Activated B cell treated with CpG ODN at 0.5 μM for 24 hours (primary cell): ENCODE measurements at regions of chr2 and their contacts with region 1.

Region 1: GRCh38 chr2:210252699-210253606 is 27.7 kb upstream of the ACADL start:
- DNase-seq: no peak
- ATAC-seq: no peak
- H3K4me3 Mint-ChIP-seq: no peak overlapping the region
- H3K27ac Mint-ChIP-seq: no peak overlapping the region
- H3K4me1 Mint-ChIP-seq: no peaks in the 10 kb centered on the region
- H3K27me3 Mint-ChIP-seq: no peaks in the 10 kb centered on the region
- CTCF ChIP-seq: no peak

Region 2: DNA sequence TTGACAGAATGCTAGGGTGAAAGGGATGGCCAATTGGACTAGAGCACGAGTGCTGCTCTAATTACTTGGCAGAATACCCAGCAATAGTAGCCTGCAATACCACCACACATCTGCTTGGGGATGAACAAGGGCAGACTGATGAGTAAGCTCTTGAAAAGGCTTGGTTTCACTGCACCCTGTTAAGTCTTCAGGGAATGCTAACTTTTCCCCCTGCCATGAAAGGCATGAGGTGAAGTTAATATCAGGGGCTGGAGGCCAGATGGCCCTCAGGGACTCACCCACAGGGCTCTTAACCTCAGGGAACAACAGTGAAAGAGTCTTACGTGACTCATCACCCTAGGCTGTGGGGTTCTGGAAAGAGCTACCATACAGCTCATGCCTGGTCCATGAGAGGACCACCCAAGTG is 113.7 kb after region 1 on chr2:
- CTCF ChIA-PET with region 1: no interaction called
- POLR2A ChIA-PET with region 1: no interaction called
- intact Hi-C with region 1: no loop called
- DNase-seq: no peak
- ATAC-seq: no peak
- H3K4me3 Mint-ChIP-seq: no peak overlapping the region
- H3K27ac Mint-ChIP-seq: no peak overlapping the region
- H3K4me1 Mint-ChIP-seq: no peaks in the 10 kb centered on the region
- H3K27me3 Mint-ChIP-seq: no peaks in the 10 kb centered on the region
- CTCF ChIP-seq: no peak

Region 3: DNA sequence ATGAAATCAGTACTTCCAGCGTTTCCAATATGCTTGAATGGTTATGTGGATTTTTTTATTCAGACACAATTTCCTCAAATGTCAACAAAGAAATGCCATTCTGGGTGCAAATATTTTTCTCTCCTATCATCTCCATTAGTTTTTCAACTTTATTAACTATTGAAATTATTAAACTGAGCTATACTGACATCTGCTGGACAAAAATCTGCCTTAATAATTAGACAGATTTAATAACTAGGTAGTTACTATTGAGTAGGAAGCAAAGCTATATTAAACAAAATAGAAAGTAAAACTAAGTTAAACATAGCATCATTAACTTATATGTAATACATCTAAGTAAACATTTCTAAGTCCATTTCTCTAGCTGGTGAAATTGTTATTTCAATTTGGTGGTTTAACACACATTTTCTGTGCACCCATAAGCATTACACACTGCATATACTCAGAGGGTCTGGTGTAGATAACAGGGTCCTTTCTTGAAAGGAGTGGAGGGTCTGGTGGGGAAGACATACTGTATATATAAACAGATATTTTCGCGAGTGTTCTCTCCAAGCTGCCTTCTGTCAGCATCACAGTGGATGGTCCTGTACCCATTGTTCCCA is 146.6 kb after region 1 on chr2:
- CTCF ChIA-PET with region 1: interaction called, 3 read pairs
- POLR2A ChIA-PET with region 1: no interaction called
- intact Hi-C with region 1: loop called (anchors 10 kb)
- DNase-seq: no peak
- ATAC-seq: no peak
- H3K4me3 Mint-ChIP-seq: no peak overlapping the region
- H3K27ac Mint-ChIP-seq: no peak overlapping the region
- H3K4me1 Mint-ChIP-seq: no peaks in the 10 kb centered on the region
- H3K27me3 Mint-ChIP-seq: peaks cover 4% of the 10 kb centered on the region
- CTCF ChIP-seq: no peak

Region 4: DNA sequence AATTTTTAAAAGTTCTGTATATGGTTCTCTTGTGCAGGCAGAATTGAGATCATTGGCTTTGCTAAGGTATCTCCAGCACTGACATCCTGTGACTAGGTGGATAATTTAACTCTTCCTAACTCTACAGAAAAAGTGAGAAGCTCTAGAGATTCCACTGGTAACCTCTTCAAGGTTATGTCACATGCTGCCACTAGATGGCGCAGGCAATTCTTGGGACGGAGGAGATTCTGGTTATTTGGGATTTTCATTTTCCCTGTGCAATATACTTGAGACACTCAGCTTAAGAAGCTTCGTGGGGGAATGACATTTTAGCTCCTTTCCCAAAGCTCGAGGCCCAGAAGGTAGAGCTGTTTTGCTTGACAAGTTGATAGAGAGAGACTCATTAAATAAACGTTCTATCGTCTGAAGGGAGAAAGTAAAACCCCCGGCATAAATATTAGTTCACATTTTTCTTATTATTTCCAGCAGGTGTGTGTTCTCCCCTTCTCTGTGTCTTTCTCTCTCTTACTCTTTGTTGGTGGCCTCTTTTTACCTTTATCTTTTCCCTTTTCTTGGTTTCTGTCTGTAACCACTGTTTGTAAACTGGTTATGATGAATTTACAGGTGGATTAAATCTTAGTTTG is 250.2 kb after region 1 on chr2:
- CTCF ChIA-PET with region 1: no interaction called
- POLR2A ChIA-PET with region 1: no interaction called
- intact Hi-C with region 1: no loop called
- DNase-seq: no peak
- ATAC-seq: peak; percentile 49
- H3K4me3 Mint-ChIP-seq: peak overlapping the region; percentile 63
- H3K27ac Mint-ChIP-seq: no peak overlapping the region
- H3K4me1 Mint-ChIP-seq: peaks cover 6% of the 10 kb centered on the region
- H3K27me3 Mint-ChIP-seq: peaks cover 22% of the 10 kb centered on the region
- CTCF ChIP-seq: peak; percentile 98

Region 5: DNA sequence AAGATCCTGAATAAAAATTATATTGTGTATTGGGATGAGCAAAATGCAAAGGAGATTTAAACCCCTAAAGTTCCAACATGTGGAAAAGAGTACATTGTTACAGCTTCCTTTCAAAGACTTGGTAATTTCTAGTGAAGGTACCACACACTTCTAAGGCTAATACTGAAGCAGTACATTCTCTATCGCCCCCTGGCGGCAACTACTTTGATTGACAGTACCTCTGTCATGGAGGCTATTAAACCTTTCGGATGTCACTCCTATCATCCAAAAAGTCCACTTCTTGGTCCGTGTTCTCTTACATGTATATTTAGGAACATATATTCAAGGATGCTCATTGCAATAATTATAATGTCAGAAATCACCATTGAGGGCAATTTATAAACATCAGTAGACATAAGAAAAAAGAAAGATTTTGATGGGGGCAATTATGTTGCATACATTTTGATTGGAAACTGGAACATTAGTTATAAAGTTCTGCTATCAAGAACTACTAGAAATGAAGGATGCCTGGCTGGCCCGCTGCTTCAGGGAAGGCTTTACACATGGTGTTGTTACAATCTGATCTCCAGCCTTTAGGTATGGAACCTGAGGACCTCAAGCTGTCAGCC is 905.0 kb after region 1 on chr2:
- CTCF ChIA-PET with region 1: no interaction called
- POLR2A ChIA-PET with region 1: no interaction called
- intact Hi-C with region 1: loop called (anchors 1 kb)
- DNase-seq: peak; percentile 25
- ATAC-seq: peak; percentile 75
- H3K4me3 Mint-ChIP-seq: no peak overlapping the region
- H3K27ac Mint-ChIP-seq: no peak overlapping the region
- H3K4me1 Mint-ChIP-seq: no peaks in the 10 kb centered on the region
- H3K27me3 Mint-ChIP-seq: peaks cover 2% of the 10 kb centered on the region
- CTCF ChIP-seq: peak; percentile 82